ENCODE measurements at regions of chr5 and their contacts with region 1.

Region 1: DNA sequence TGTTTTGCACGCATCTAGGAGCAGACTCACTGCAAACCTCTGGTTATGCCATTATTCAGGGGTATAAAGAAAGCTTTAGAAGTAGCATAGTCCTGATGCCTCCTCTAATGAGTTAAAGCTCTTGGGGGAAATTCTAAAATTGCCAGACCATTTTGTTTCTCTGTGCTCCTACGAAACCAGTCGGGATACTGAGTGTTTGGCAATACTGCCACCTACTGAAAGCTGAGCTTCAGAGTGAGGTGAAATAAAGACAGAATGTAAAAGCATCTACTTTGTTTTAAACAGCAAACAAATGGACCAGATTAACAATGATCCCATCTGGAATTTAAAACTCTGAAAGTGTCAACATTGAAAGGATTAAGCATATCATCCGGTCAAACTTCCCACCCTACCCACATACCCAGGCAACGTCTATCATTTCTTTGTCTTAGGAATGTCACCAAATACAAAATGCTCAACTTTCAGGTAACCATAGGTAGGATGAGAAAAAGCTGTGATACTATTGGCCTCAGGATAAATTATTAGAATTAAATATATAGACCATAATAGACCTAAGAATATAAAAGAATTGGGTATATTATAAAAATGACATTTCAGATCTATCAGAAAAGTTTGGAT is 77.8 kb upstream of the SHISAL2B start:
- DNase-seq: peak; percentile 65
- H3K27ac ChIP-seq: no peak overlapping the region
- CTCF ChIP-seq: peak; percentile 87

Region 2: GRCh38 chr5:64147849-64148441 is 464.5 kb before region 1 on chr5:
- CTCF ChIA-PET with region 1: interaction called, 11 read pairs
- POLR2A ChIA-PET with region 1: no interaction called
- DNase-seq: peak; percentile 62
- H3K27ac ChIP-seq: no peak overlapping the region
- CTCF ChIP-seq: peak; percentile 88

Region 3: GRCh38 chr5:64229163-64229774 is 383.2 kb before region 1 on chr5:
- CTCF ChIA-PET with region 1: interaction called, 20 read pairs
- POLR2A ChIA-PET with region 1: no interaction called
- DNase-seq: peak; percentile 62
- H3K27ac ChIP-seq: no peak overlapping the region
- CTCF ChIP-seq: peak; percentile 82

Region 4: DNA sequence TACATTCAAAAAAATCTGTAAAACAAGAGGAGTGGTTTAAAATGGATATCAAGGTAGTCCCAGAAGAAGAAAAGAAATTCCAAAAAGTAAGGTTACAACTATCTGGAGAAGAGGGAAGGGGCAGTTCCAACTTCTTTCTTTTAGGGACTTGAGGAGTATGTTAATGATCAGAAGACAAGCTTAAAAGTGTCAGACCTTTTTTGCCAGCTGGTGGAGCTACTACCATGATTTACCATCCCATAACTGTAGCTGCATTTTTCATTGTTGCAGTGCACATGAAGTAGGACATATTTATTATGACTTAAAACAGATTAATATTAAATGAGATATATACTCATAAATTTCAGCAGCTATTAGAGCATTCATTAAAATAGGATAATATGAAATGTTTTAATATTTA is 265.1 kb before region 1 on chr5:
- CTCF ChIA-PET with region 1: interaction called, 10 read pairs
- POLR2A ChIA-PET with region 1: no interaction called
- DNase-seq: peak; percentile 4
- H3K27ac ChIP-seq: no peak overlapping the region
- CTCF ChIP-seq: no peak